AG04450 (cell line): ENCODE measurements at regions of chr9 and their contacts with region 1.

Region 1: GRCh38 chr9:137672907-137673791 is 54.3 kb downstream of the EHMT1 start:
- DNase-seq: peak; percentile 32
- H3K4me3 ChIP-seq: no peak overlapping the region
- H3K27ac ChIP-seq: no peak overlapping the region
- H3K27me3 ChIP-seq: no peaks in the 10 kb centered on the region
- CTCF ChIP-seq: peak; percentile 89

Region 2: GRCh38 chr9:136885950-136886578 is 787.1 kb before region 1 on chr9 and contains the start of gene TRAF2:
- CTCF ChIA-PET with region 1: no interaction called
- POLR2A ChIA-PET with region 1: no interaction called
- DNase-seq: peak; percentile 99
- H3K4me3 ChIP-seq: peak within 1 kb of the TSS; percentile 76
- H3K27ac ChIP-seq: no peak within 1 kb of the TSS
- H3K27me3 ChIP-seq: no peaks in the 10 kb centered on the region
- CTCF ChIP-seq: no peak
- polyA plus RNA-seq, gene TRAF2: 6.1 and 6.9 TPM in 2 replicates

Region 3: GRCh38 chr9:137578518-137579258 is 94.5 kb before region 1 on chr9 and contains the start of gene DPH7:
- CTCF ChIA-PET with region 1: interaction called, 4 read pairs
- POLR2A ChIA-PET with region 1: interaction called, 15 read pairs
- DNase-seq: peak; percentile 63
- H3K4me3 ChIP-seq: peak within 1 kb of the TSS; percentile 91
- H3K27ac ChIP-seq: peak within 1 kb of the TSS; percentile 75
- H3K27me3 ChIP-seq: no peaks in the 10 kb centered on the region
- CTCF ChIP-seq: peak; percentile 82
- polyA plus RNA-seq, gene DPH7: 19.5 and 21.9 TPM in 2 replicates

Region 4: GRCh38 chr9:137621131-137621757 is 51.9 kb before region 1 on chr9:
- CTCF ChIA-PET with region 1: interaction called, 10 read pairs
- POLR2A ChIA-PET with region 1: no interaction called
- DNase-seq: no peak
- H3K4me3 ChIP-seq: no peak overlapping the region
- H3K27ac ChIP-seq: no peak overlapping the region
- H3K27me3 ChIP-seq: no peaks in the 10 kb centered on the region
- CTCF ChIP-seq: peak; percentile 47

Region 5: DNA sequence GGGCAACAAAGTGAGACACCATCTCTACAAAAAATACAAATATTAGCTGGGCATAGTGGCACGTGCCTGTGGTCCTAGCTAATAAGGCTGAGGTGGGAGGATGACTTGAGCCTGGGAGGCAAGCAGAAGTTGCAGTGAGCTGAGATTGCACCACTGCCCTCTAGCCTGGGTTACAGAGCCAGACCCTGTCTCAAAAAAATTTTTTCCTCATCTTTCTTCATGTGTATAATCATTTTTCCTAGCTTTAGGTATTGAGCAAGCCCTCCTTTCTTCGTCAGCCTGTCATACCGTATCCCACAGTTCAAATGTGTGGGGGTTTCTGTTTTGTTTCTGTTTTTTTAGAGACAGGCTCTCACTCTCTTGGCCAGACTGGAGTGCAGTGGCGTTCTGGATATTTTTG is 13.0 kb before region 1 on chr9:
- CTCF ChIA-PET with region 1: interaction called, 14 read pairs
- POLR2A ChIA-PET with region 1: no interaction called
- DNase-seq: no peak
- H3K4me3 ChIP-seq: no peak overlapping the region
- H3K27ac ChIP-seq: no peak overlapping the region
- H3K27me3 ChIP-seq: no peaks in the 10 kb centered on the region
- CTCF ChIP-seq: no peak

Region 6: DNA sequence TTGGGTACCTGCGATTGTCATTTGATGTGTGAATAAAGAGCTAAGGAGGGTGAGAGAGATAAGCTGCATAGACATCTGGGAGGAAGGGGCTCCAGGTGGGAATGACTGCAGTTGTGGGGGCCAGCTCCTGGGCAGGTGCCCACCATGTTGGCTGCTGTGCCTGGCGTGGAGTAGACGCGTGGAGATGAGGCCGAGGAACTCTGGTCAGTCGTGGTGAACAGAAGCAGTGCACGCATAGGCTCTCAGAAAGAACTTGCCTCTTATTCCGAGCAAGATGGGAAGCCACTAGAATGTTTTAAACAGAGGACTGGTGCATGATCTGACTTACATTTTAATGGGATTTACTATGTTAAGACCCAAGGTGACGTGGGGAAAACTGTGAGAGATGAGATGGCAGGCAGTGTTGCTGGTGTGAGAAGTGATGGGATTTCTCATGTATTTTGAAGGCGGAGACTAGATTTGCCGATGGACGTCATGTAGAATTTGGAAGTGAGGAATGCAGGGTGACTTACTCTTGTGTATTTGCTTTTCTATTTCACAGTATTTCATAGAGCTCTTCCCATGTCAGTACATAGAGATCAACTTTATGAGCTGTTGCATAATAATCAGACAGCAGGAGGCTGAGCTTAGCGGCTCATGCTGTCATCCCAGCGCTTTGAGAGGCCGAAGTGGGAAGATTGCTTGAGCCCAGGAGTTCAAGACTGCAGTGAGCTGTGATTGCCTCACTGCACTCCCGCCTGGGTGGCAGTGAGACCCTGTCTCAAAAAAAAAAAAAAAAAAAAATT is 16.8 kb after region 1 on chr9:
- CTCF ChIA-PET with region 1: interaction called, 13 read pairs
- POLR2A ChIA-PET with region 1: interaction called, 3 read pairs
- DNase-seq: peak; percentile 23
- H3K4me3 ChIP-seq: no peak overlapping the region
- H3K27ac ChIP-seq: no peak overlapping the region
- H3K27me3 ChIP-seq: no peaks in the 10 kb centered on the region
- CTCF ChIP-seq: no peak

Region 7: DNA sequence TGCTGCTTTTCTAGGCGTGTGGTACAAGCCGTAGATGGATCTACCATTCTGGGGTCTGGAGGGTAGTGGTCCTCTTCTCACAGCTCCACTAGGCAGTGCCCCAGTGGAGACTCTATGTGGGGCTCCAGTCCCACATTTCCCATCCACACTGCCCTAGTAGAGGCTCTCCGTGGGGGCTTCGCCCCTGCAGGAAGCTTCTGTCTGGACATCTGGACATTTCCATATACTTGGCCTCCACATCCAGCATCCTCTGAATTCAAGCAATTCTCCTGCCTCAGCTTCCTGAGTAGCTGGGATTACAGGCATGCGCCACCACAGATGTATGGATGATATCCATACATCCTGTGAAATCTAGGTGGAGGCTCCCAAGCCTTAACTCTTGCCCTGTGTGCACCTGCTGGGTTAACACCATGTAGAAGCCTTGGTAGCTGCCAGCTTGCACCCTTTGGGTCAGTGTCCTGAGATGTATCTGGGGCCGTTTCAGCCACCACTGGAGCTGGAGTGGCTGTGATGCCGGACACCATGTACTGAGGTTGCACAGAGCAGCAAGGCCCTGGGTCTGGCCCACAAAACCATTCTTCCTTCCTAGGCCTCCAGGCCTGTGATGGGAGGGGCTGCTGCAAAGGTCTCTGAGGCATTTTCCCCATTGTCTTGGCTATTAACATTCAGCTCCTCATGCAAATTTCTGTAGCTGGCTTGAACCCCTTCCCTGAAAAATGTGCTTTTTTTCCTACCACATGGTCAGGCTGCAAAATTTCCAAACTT is 29.6 kb after region 1 on chr9:
- CTCF ChIA-PET with region 1: interaction called, 12 read pairs
- POLR2A ChIA-PET with region 1: interaction called, 11 read pairs
- DNase-seq: no peak
- H3K4me3 ChIP-seq: no peak overlapping the region
- H3K27ac ChIP-seq: no peak overlapping the region
- H3K27me3 ChIP-seq: no peaks in the 10 kb centered on the region
- CTCF ChIP-seq: no peak

Region 8: DNA sequence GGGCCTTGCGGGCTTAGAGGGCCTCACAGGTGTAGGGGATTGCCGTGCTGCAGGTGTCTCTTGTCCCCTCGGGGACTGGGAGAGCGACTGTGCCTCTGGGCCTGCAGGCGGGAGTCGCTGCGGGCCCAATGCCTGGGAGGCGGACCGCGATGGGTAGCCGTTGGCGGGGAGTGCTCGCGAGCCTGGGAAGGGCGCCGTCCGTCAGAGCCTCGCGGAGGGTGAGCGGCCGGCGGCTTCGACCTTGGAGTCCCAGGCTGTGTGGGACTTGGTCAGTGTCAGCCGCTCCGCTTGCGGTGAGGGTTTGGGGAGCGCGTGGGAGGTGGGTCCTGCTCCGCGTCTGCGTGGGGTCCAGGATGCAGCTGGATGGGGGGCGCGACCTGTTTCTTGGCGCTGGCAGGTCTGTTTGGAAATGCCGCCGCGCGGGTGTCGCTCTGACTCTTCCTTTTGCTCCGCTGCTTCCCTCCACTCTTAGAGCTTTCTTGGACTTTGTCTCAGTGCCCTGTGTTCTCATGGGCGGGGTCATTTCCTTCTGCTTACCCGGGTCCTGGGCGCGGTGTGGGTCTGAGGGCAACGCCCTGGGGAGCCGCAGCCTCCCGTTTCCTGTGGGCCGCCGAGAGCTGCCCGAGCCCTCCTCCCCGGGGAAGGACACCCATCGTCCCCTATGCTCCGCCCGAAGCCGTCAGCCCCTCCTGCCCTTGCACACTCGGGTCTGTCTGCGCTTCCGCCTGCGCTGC is 115.6 kb after region 1 on chr9:
- CTCF ChIA-PET with region 1: interaction called, 17 read pairs
- POLR2A ChIA-PET with region 1: no interaction called
- DNase-seq: no peak
- H3K4me3 ChIP-seq: no peak overlapping the region
- H3K27ac ChIP-seq: no peak overlapping the region
- H3K27me3 ChIP-seq: no peaks in the 10 kb centered on the region
- CTCF ChIP-seq: no peak

Region 9: DNA sequence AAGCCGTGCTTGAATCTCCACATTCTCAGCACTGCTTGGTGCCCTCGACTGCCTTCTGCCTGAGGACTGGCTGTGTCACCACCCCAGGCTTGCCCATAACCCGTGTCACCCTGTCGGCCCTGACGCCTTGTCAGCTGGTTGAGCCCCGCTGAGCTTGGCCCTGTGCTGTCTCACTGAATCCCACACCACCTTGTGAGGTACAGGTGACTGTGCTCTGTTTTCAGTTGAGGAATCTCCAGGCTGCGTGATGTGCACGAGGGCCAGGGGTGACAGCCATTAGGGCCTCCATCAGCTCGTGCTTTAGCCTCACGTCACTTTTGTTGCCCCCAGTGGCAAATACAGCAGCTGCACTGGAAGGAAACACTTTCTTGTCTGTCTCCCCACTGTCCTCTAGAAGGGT is 295.1 kb after region 1 on chr9:
- CTCF ChIA-PET with region 1: no interaction called
- POLR2A ChIA-PET with region 1: no interaction called
- DNase-seq: no peak
- H3K4me3 ChIP-seq: no peak overlapping the region
- H3K27ac ChIP-seq: no peak overlapping the region
- H3K27me3 ChIP-seq: no peaks in the 10 kb centered on the region
- CTCF ChIP-seq: no peak